Lower lobe of right lung (tissue), 2 donors: ENCODE measurements at regions of chr2 and their contacts with region 1.

Region 1: GRCh38 chr2:26605195-26605998 is 35.8 kb downstream of the CIB4 start:
- DNase-seq: no peak
- ATAC-seq: peak; percentile 70 to 78
- H3K4me3 ChIP-seq: no peak overlapping the region
- H3K27ac ChIP-seq: no peak overlapping the region
- H3K4me1 ChIP-seq: peaks cover 20% of the 10 kb centered on the region
- H3K27me3 ChIP-seq: no peaks in the 10 kb centered on the region
- CTCF ChIP-seq: peak; percentile 86

Region 2: GRCh38 chr2:26456440-26457250 is 148.8 kb before region 1 on chr2:
- intact Hi-C with region 1: no loop called
- DNase-seq: peak; percentile 40
- ATAC-seq: no peak
- H3K4me3 ChIP-seq: no peak overlapping the region
- H3K27ac ChIP-seq: no peak overlapping the region
- H3K4me1 ChIP-seq: no peaks in the 10 kb centered on the region
- H3K27me3 ChIP-seq: no peaks in the 10 kb centered on the region
- CTCF ChIP-seq: no peak

Region 3: DNA sequence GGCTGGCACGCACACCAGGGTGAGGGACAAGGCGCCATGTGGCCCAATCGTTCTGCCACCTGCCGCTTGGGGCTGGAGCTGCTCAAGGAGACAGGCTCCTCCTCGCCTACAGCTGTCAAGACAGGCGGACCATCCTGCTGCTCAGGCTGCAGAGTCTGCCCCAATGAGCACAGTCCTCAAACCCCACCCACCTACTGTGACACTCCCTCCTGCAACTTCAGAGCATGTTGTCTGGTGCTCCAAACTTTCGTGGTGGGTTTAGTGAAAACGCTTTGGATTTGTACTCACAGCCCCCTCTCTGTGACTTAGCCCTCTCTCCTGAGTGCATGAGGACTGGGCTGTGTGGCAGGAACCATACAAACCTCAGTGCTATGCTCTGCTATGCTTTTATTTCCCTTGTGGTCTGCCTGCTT is 135.5 kb after region 1 on chr2:
- intact Hi-C with region 1: loop called (anchors 5 kb)
- DNase-seq: no peak
- ATAC-seq: peak; percentile 40 to 53
- H3K4me3 ChIP-seq: no peak overlapping the region
- H3K27ac ChIP-seq: no peak overlapping the region
- H3K4me1 ChIP-seq: peaks cover 11% of the 10 kb centered on the region
- H3K27me3 ChIP-seq: no peaks in the 10 kb centered on the region
- CTCF ChIP-seq: no peak